IMR-90 (cell line): ENCODE measurements at regions of chr15 and their contacts with region 1.

Region 1: GRCh38 chr15:87461621-87462020 is 794.9 kb downstream of the NTRK3 start:
- DNase-seq: no peak
- ATAC-seq: no peak
- H3K4me3 ChIP-seq: no peak overlapping the region
- H3K27ac ChIP-seq: no peak overlapping the region
- H3K4me1 ChIP-seq: no peaks in the 10 kb centered on the region
- H3K27me3 ChIP-seq: no peaks in the 10 kb centered on the region
- CTCF ChIP-seq: no peak
- POLR2A ChIP-seq: no peak
- RAD21 ChIP-seq: no peak

Region 2: GRCh38 chr15:87401973-87402372 is 59.6 kb before region 1 on chr15:
- CTCF ChIA-PET with region 1: no interaction called
- POLR2A ChIA-PET with region 1: no interaction called
- dilution Hi-C with region 1: no loop called
- in situ Hi-C with region 1: no loop called
- intact Hi-C with region 1: loop called (anchors 10 kb)
- DNase-seq: no peak
- ATAC-seq: no peak
- H3K4me3 ChIP-seq: no peak overlapping the region
- H3K27ac ChIP-seq: no peak overlapping the region
- H3K4me1 ChIP-seq: no peaks in the 10 kb centered on the region
- H3K27me3 ChIP-seq: no peaks in the 10 kb centered on the region
- CTCF ChIP-seq: no peak
- POLR2A ChIP-seq: no peak
- RAD21 ChIP-seq: no peak